ENCODE measurements at regions of chr17 and their contacts with region 1.

Region 1: GRCh38 chr17:20852239-20852989 is 190.4 kb downstream of the USP22 start:
- DNase-seq: no peak
- ATAC-seq: peak; percentile 58
- H3K4me3 Mint-ChIP-seq: peak overlapping the region; percentile 61
- H3K27ac Mint-ChIP-seq: no peak overlapping the region
- H3K4me1 Mint-ChIP-seq: peaks cover 13% of the 10 kb centered on the region
- H3K27me3 Mint-ChIP-seq: peaks cover 34% of the 10 kb centered on the region
- CTCF ChIP-seq: no peak

Region 2: DNA sequence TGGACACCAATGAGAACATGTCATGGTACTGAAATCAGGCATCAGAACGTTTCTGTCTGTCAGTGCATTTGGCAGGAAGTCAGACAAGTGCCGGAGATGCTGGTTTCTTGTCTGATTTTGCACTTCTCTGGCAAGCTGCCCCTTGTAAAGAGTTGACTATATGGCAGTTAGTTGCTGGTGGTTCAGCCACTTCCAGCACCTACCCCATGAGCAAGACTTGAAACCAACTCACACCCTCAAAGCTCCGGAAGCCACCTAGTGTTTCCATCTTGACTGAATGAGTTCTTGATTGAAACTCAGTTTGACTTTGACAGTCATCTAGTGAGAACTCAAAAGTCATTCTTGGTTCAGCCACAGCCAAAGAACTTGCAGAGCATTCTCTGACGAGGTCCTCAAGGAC is 618.1 kb before region 1 on chr17:
- CTCF ChIA-PET with region 1: no interaction called
- POLR2A ChIA-PET with region 1: no interaction called
- intact Hi-C with region 1: loop called (anchors 10 kb)
- DNase-seq: no peak
- ATAC-seq: no peak
- H3K4me3 Mint-ChIP-seq: no peak overlapping the region
- H3K27ac Mint-ChIP-seq: no peak overlapping the region
- H3K4me1 Mint-ChIP-seq: no peaks in the 10 kb centered on the region
- H3K27me3 Mint-ChIP-seq: no peaks in the 10 kb centered on the region
- CTCF ChIP-seq: no peak

Region 3: GRCh38 chr17:20805751-20806150 is 46.7 kb before region 1 on chr17:
- CTCF ChIA-PET with region 1: no interaction called
- POLR2A ChIA-PET with region 1: no interaction called
- intact Hi-C with region 1: no loop called
- DNase-seq: no peak
- ATAC-seq: no peak
- H3K4me3 Mint-ChIP-seq: no peak overlapping the region
- H3K27ac Mint-ChIP-seq: no peak overlapping the region
- H3K4me1 Mint-ChIP-seq: peaks cover 4% of the 10 kb centered on the region
- H3K27me3 Mint-ChIP-seq: no peaks in the 10 kb centered on the region
- CTCF ChIP-seq: no peak

Measured in activated B cell treated with CpG ODN at 0.5 μM for 24 hours (primary cell).